Astrocyte of the cerebellum (primary cell): ENCODE measurements at regions of chr7 and their contacts with region 1.

Region 1: GRCh38 chr7:42931834-42932651 is at the starts of genes MRPL32 and PSMA2:
- DNase-seq: peak; percentile 96
- H3K4me3 ChIP-seq: peak within 1 kb of the TSS; percentile 73
- CTCF ChIP-seq: no peak

Region 2: DNA sequence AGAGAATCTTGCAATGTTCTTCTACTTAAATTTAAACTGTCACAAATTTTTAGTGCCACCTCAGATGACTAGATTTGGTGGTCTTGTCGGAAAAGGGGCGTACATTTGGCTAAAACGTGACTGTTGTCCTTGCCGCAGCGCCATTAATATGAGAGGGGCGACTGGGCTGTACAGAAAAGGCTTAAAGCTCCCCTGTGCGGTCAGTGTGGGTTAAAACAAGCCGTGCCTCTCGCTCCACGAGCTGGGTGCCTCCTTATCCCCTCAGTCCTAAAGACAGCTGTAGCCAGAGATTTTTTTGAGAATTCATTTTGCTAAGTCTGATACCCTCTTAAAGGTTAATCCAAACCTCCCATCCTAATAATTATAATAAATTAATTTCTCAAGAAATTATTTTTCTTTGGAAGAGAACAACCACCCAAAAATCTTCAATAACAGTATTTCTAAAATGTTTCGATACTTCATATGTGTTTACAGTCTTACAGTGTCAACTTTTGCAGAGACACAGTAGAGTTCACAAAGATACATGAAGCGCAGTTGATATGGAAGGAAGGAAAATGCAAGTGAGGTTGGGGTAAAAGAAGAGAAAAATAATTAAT is 88.7 kb before region 1 on chr7:
- in situ Hi-C with region 1: no loop called
- DNase-seq: peak; percentile 13
- H3K4me3 ChIP-seq: peak overlapping the region; percentile 11
- CTCF ChIP-seq: peak; percentile 69

Region 3: DNA sequence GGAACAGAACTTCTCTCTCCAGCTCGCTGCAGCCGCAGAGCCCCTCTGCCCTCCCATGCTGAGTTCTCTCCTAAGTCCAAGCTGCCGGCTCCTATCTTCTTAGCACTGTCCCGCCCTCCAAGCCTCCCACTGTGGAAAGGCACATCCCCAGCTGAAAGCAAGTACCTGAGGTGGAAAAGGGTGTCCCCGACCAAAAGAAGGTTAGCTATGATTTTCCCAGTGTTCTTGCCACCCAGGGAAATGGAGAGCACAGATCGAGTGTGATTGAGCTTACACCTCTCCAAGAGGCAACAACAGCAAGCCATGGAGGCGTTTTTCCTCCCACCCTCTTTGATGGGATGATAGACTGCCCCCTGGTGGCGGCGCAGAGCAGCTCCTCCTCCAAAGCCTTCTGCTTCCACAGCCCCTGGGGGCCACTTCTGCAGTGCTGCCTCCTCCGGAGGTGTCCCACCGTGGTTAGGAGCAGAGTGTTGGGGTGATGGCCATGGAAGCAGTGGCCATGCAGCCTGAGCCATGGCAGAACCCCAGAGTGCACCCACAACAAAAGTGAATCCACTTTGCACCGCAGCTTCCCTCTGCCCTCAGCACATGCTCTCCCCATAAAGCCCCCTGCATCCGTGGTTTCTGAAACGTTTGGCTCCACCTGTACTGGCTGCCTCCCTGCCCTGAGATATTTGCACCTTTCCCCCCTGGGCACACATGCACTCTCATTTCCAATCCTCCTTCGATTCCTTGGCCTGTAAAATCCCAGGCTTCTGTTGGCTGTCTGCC is 507.8 kb after region 1 on chr7:
- in situ Hi-C with region 1: loop called (anchors 25 kb)
- DNase-seq: peak; percentile 12
- H3K4me3 ChIP-seq: no peak overlapping the region
- CTCF ChIP-seq: peak; percentile 70